CD4-positive, alpha-beta T cell (primary cell): ENCODE measurements at regions of chr7 and their contacts with region 1.

Region 1: GRCh38 chr7:75072978-75073282 is 672 bp downstream of the RCC1L start:
- DNase-seq: no peak
- ATAC-seq: no peak
- H3K4me3 ChIP-seq: peak overlapping the region; percentile 74
- H3K4me3 Mint-ChIP-seq: peak overlapping the region; percentile 94
- H3K27ac ChIP-seq: peak overlapping the region; percentile 67 to 78
- H3K27ac Mint-ChIP-seq: peak overlapping the region; percentile 86
- H3K4me1 ChIP-seq: peaks cover 9% of the 10 kb centered on the region
- H3K4me1 Mint-ChIP-seq: peaks cover 16% of the 10 kb centered on the region
- H3K27me3 ChIP-seq: no peaks in the 10 kb centered on the region
- H3K27me3 Mint-ChIP-seq: no peaks in the 10 kb centered on the region
- CTCF ChIP-seq: no peak

Region 2: GRCh38 chr7:75642810-75643486 is 570.0 kb after region 1 on chr7:
- CTCF ChIA-PET with region 1: no interaction called
- POLR2A ChIA-PET with region 1: no interaction called
- intact Hi-C with region 1: loop called in 1 of 2 experiments (anchors 5 kb)
- DNase-seq: peak; percentile 42 to 84 (median 56)
- ATAC-seq: peak; percentile 90
- H3K4me3 ChIP-seq: no peak overlapping the region
- H3K4me3 Mint-ChIP-seq: peak overlapping the region; percentile 65
- H3K27ac ChIP-seq: no peak overlapping the region
- H3K27ac Mint-ChIP-seq: no peak overlapping the region
- H3K4me1 ChIP-seq: peaks cover 17% of the 10 kb centered on the region
- H3K4me1 Mint-ChIP-seq: peaks cover 10% of the 10 kb centered on the region
- H3K27me3 ChIP-seq: no peaks in the 10 kb centered on the region
- H3K27me3 Mint-ChIP-seq: no peaks in the 10 kb centered on the region
- CTCF ChIP-seq: peak; percentile 74

Region 3: GRCh38 chr7:75762314-75762917 is 689.5 kb after region 1 on chr7:
- CTCF ChIA-PET with region 1: interaction called, 3 read pairs
- POLR2A ChIA-PET with region 1: interaction called, 4 read pairs
- intact Hi-C with region 1: loop called in 1 of 2 experiments (anchors 5 kb)
- DNase-seq: peak in 4 of 14 experiments; percentile 1 to 64 (median 61)
- ATAC-seq: peak; percentile 94
- H3K4me3 ChIP-seq: no peak overlapping the region
- H3K4me3 Mint-ChIP-seq: no peak overlapping the region
- H3K27ac ChIP-seq: no peak overlapping the region
- H3K27ac Mint-ChIP-seq: no peak overlapping the region
- H3K4me1 ChIP-seq: no peaks in the 10 kb centered on the region
- H3K4me1 Mint-ChIP-seq: peaks cover 3% of the 10 kb centered on the region
- H3K27me3 ChIP-seq: no peaks in the 10 kb centered on the region
- H3K27me3 Mint-ChIP-seq: no peaks in the 10 kb centered on the region
- CTCF ChIP-seq: peak; percentile 72